ENCODE measurements at regions of chr11 and their contacts with region 1.

Region 1: DNA sequence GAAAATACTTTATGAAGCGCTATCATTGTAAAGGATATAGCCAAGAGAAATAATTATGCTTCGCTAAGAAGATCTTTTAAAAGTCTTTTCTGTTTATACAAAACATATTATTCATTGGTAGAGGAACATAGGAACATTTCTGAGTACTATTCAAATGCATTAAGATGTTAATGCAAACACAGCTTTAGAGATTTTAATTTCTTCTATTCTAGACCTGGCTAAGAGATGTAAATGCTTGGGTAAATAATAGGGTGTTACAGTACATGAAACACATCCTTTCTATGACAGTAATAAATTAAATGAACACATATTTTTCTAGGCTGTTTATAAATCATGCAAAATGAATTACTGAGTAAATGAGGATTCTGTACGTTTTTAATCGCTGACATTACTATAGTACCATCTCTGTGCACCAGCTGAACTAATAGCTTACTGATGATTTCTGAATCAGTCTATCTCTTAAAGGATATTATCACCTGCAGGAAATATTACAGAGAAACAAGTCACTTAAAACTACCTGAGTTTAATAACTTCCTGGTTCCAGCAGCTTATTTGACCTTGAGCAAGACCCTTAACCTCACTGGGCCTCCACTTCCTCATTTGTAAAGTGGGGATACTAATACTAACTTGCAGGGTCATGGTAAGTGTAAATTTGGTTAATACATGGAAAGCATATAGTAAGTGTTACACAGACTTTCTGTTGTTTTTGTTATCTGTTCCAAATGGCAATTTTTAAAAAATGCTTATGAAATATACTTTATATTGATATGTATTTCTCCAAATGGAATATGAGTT is 344.9 kb downstream of the DYNC2H1 start:
- DNase-seq: no peak
- ATAC-seq: no peak
- H3K4me3 ChIP-seq: no peak overlapping the region
- H3K27ac ChIP-seq: no peak overlapping the region
- H3K4me1 ChIP-seq: no peaks in the 10 kb centered on the region
- H3K27me3 ChIP-seq: no peaks in the 10 kb centered on the region
- CTCF ChIP-seq: no peak
- POLR2A ChIP-seq: no peak

Region 2: GRCh38 chr11:102830008-102830727 is 623.9 kb before region 1 on chr11:
- in situ Hi-C with region 1: no loop called
- intact Hi-C with region 1: no loop called
- DNase-seq: no peak
- ATAC-seq: no peak
- H3K4me3 ChIP-seq: no peak overlapping the region
- H3K27ac ChIP-seq: no peak overlapping the region
- H3K4me1 ChIP-seq: no peaks in the 10 kb centered on the region
- H3K27me3 ChIP-seq: no peaks in the 10 kb centered on the region
- CTCF ChIP-seq: no peak
- POLR2A ChIP-seq: no peak

Region 3: GRCh38 chr11:103464420-103464819 is 10.3 kb after region 1 on chr11:
- in situ Hi-C with region 1: no loop called
- intact Hi-C with region 1: loop called (anchors 1 kb)
- DNase-seq: no peak
- ATAC-seq: no peak
- H3K4me3 ChIP-seq: no peak overlapping the region
- H3K27ac ChIP-seq: no peak overlapping the region
- H3K4me1 ChIP-seq: no peaks in the 10 kb centered on the region
- H3K27me3 ChIP-seq: no peaks in the 10 kb centered on the region
- CTCF ChIP-seq: no peak
- POLR2A ChIP-seq: no peak

Region 4: DNA sequence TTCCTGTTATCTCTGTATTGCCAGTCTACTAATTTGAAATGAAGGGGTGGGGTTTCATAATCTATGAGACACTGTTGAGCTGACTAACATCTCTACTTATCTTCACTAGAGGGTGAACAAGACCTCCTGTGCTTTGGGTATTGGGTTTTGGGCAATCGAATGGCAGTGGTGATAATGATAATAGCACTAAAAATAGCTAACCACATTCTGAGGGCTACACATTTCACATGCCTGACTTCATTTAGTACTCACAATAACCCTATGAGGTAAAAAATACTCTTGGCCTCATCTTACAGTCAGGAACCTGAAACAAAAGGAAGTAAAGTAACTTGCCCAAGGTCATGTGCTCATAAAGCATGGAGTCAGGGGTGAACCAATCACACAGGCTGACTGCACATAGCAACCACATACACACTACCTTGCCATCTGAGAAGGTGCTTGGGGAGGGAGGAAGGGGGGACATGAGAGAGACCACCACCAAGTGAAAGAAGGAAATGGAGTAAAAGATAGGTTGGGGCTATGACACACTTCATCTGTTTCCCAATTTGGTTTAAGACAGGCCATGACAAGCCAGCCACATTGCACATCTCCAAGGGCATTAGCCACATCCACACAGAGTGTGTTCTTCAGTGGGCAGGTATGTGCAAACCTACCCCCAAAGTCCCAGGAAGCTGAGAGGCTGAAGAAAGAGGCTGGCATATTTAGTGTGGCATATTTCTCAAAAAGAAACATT is 194.7 kb after region 1 on chr11:
- in situ Hi-C with region 1: no loop called
- intact Hi-C with region 1: no loop called
- DNase-seq: no peak
- ATAC-seq: no peak
- H3K4me3 ChIP-seq: no peak overlapping the region
- H3K27ac ChIP-seq: no peak overlapping the region
- H3K4me1 ChIP-seq: no peaks in the 10 kb centered on the region
- H3K27me3 ChIP-seq: no peaks in the 10 kb centered on the region
- CTCF ChIP-seq: no peak
- POLR2A ChIP-seq: no peak